ENCODE measurements at regions of chr19 and their contacts with region 1.

Region 1: DNA sequence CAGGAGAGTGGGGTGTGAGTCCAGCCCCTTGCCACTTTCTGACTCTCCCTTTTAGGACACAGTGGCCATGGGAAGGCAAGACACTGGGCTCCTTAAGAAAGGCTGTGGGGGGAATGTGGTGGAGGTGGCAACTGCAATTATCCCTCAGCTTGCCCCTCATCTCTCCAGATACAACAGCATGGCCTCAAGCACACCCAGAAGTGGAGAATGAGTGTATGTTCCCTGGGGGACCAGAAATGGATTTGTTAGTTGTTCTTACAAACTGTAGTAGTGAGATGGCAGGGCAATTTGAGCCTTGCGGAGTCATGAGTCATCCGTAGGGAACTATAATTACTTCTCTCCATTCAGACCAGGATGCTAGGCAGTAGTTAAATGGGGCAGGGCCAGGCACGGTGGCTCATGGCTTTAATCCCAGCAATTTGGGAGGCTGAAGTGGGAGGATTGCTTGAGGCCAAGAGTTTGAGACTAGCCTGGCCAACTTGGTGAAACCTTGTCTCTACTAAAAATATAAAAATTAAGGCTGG is 25.6 kb upstream of the CXCL17 start:
- DNase-seq: no peak
- ATAC-seq: no peak

Region 2: GRCh38 chr19:42529248-42529764 is 61.0 kb after region 1 on chr19:
- intact Hi-C with region 1: loop called (anchors 5 kb)
- DNase-seq: no peak
- ATAC-seq: peak; percentile 46

Region 3: DNA sequence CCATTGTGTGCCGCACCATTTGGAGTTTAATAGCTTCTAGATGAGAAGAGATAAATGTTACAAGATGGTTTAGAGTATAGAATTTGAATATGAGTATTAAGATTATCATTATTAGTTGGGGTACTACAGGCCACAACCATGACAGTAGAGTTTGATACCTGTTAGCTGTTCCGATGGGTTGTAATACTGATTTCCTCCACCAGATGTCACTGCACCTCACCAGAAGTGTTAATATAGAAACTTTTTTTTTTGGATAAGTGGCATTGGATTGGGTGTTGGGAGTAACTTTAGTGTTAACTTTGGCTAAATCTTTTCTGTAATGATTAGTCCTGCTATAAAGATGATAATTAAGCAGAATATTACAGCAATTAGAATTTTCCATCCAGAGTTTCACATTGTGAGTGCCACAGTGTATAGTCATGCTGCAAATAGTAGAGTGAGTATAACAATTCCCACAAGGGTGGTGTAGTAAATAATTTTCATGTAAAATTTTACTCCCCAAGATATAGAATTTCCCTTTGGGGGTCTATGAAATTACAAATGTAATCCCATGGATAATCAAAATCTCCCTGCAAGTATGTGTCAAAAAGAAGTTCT is 215.7 kb after region 1 on chr19:
- intact Hi-C with region 1: no loop called
- DNase-seq: no peak
- ATAC-seq: no peak